Head of caudate nucleus (tissue), 42 donors: ENCODE measurements at regions of chr7 and their contacts with region 1.

Region 1: DNA sequence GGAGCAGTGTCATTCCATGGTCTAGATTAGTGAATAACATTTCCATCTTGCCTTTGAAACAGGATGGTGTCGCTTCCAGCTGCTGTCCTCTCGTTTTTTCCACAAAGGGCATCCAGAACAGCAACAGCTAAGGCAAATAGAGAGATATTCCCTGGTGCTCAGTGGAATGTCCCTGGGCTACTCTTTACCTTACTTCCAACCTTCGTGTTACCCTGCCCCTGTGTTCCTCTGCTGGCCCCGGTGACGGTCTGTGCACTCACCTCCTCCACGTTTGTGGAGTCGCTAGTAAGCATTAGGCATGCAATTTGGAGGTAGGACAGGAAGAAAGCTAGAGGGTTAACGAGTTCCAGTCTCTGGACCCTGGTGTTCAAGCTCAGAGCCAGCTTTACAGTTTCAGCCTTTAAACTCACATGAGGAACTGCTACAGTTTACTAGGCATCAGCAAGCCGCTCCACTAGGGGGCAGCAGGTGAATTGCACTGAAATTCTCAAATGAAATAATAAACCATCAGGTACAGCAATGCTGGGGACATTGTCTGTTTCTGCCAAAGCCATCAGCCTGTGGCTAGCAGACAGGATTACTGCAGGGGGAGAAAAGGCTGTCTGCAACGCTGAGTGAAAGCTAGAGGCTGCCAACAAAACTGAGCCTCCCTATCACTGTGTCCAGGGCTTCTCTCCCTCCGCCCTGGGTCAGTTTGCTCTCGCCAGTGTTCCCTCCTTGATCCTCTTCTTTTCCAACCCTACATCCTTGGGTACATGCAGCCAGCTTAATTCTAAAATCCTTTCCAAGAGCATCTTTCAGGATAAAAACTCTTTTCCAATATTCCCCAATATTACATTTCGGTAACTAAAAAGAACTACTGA is 9.0 kb downstream of the MRPL32 start:
- DNase-seq: peak; percentile 68 to 94 (median 87)

Region 2: GRCh38 chr7:43112941-43113621 is 171.9 kb after region 1 on chr7:
- intact Hi-C with region 1: loop called (anchors 10 kb)
- DNase-seq: peak in 38 of 42 donors; percentile 6 to 61 (median 39)

Region 3: GRCh38 chr7:43729214-43729923 is 788.2 kb after region 1 on chr7 and contains the start of gene COA1:
- intact Hi-C with region 1: loop called (anchors 10 kb)
- DNase-seq: peak; percentile 84 to 95 (median 89)